OCI-LY7 (cell line): ENCODE measurements at regions of chr3 and their contacts with region 1.

Region 1: GRCh38 chr3:150408221-150409102 is at the start of gene TSC22D2:
- DNase-seq: peak; percentile 93
- H3K4me3 ChIP-seq: peak within 1 kb of the TSS; percentile 78
- H3K27ac ChIP-seq: peak within 1 kb of the TSS; percentile 95
- H3K4me1 ChIP-seq: peaks cover 11% of the 10 kb centered on the region
- CTCF ChIP-seq: no peak
- total RNA-seq, gene TSC22D2: 5.9 and 6.2 TPM in 2 replicates

Region 2: DNA sequence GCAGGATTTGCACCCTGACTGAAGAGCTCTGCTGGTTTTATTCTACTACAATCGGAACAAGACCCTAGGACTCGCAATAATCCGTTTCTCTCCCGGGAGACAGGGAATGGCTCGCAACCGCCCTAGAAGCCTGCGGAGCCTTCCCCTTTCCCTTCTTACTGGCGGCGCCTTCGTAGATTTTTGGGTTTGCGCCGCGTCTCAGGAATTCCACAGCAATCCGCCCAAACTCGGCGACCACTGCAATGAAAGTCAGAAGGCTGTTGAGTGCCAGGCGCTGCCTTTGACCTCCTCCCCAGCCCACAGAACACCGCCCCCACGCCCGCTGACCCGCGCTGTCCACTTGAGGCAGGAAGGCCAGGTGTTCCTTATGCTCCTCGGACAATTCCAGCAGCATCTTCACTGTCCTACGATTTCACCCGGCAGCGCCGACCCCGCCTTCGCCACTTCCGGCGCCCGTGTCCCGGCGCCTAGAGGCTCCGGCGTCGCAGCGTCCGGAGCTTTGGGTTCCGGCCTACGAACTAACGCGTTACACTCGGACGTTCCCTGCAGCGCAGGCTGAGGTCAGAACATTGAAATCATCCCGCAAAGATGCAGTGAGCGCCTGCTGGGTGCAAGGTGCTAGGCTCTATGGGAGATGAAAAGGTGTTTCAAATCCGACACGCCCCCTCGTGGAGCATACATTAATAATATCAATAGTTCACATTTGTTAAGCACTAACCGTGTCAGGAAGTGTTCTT is 656.2 kb before region 1 on chr3 and contains the start of gene COMMD2:
- CTCF ChIA-PET with region 1: no interaction called
- POLR2A ChIA-PET with region 1: no interaction called
- intact Hi-C with region 1: loop called (anchors 5 kb)
- DNase-seq: peak; percentile 94
- H3K4me3 ChIP-seq: peak within 1 kb of the TSS; percentile 77
- H3K27ac ChIP-seq: peak within 1 kb of the TSS; percentile 36
- H3K4me1 ChIP-seq: peaks cover 22% of the 10 kb centered on the region
- CTCF ChIP-seq: peak; percentile 75
- total RNA-seq, gene COMMD2: 24.9 and 27.2 TPM in 2 replicates

Region 3: GRCh38 chr3:150341891-150342290 is 66.6 kb before region 1 on chr3:
- CTCF ChIA-PET with region 1: no interaction called
- POLR2A ChIA-PET with region 1: no interaction called
- intact Hi-C with region 1: no loop called
- DNase-seq: no peak
- H3K4me3 ChIP-seq: no peak overlapping the region
- H3K27ac ChIP-seq: no peak overlapping the region
- H3K4me1 ChIP-seq: no peaks in the 10 kb centered on the region
- CTCF ChIP-seq: no peak

Region 4: GRCh38 chr3:150384296-150385212 is 23.9 kb before region 1 on chr3:
- CTCF ChIA-PET with region 1: interaction called, 3 read pairs
- POLR2A ChIA-PET with region 1: interaction called, 16 read pairs
- intact Hi-C with region 1: no loop called
- DNase-seq: peak; percentile 83
- H3K4me3 ChIP-seq: peak overlapping the region; percentile 16
- H3K27ac ChIP-seq: peak overlapping the region; percentile 27
- H3K4me1 ChIP-seq: peaks cover 19% of the 10 kb centered on the region
- CTCF ChIP-seq: peak; percentile 69

Region 5: DNA sequence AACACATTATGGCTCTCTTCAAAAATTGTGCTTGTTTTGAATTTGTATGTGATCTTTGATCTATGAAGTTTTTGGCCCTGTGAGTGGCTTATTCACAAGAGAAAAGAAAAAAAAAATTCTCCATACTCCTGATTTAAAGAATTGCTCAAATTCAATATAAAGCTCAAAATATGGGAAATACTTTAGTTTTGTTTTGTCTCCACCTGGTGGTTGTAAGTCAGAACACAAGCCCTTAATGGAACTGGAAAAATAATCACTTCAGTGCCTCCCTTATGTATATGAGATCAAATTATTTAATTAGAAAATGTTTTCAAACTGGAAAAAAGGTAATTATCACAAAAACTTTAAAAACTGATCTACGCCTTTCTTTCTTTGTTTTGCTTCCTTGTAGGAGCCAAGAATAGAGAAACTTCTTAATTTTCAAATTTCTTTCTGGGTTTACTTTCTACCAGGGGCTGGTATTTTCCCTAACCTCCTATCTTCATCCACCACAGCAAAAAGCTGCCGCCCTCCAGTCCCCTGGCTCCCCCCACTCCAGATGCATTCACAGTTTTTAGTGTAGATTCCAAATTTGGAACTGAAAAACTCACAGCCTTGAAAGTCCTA is 87.2 kb after region 1 on chr3:
- CTCF ChIA-PET with region 1: no interaction called
- POLR2A ChIA-PET with region 1: no interaction called
- intact Hi-C with region 1: loop called (anchors 1 kb)
- DNase-seq: peak; percentile 58
- H3K4me3 ChIP-seq: no peak overlapping the region
- H3K27ac ChIP-seq: no peak overlapping the region
- H3K4me1 ChIP-seq: no peaks in the 10 kb centered on the region
- CTCF ChIP-seq: peak; percentile 96

Region 6: DNA sequence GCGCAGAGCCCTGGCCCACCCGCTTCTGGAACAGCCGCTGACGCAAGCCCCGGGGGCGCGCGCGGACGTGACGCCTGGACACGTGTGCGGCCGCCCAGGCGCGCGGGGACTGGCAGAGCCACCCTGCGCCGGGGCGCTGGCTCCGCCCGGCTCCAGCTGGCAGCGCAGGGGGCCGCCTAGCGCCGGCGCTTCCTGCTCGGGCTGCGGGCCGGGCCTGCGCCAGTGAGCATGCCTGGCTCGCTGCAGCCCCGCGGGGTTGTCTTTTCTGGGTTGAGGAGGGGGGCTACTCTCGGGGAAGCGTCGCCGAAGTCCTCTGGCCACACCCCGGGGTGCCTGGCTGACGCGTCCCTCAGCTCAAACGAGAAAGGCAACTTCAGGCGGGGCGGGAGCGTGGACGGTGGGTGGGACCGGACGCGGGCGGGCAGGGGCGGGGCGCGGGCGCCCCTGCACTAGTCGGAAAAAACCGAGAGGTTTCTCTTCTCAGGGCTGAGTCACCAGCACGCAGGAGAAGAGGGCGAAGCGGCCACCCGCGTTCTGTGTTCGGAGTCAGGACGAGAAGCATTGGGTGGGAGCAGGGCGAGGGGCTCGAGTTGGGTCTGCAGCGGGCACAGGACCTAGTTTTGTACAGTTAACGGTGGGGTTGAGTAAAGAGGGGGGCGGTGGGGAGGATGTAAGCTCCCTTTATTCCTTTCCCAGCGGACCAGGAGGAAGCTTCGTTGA is 354.8 kb after region 1 on chr3 and contains the start of gene SIAH2:
- CTCF ChIA-PET with region 1: interaction called, 3 read pairs
- POLR2A ChIA-PET with region 1: interaction called, 5 read pairs
- intact Hi-C with region 1: loop called (anchors 1 kb)
- DNase-seq: peak; percentile 92
- H3K4me3 ChIP-seq: peak within 1 kb of the TSS; percentile 78
- H3K27ac ChIP-seq: peak within 1 kb of the TSS; percentile 58
- H3K4me1 ChIP-seq: peaks cover 71% of the 10 kb centered on the region
- CTCF ChIP-seq: no peak
- total RNA-seq, gene SIAH2: 22.2 and 22.7 TPM in 2 replicates